ENCODE measurements at regions of chr2 and their contacts with region 1.

Region 1: DNA sequence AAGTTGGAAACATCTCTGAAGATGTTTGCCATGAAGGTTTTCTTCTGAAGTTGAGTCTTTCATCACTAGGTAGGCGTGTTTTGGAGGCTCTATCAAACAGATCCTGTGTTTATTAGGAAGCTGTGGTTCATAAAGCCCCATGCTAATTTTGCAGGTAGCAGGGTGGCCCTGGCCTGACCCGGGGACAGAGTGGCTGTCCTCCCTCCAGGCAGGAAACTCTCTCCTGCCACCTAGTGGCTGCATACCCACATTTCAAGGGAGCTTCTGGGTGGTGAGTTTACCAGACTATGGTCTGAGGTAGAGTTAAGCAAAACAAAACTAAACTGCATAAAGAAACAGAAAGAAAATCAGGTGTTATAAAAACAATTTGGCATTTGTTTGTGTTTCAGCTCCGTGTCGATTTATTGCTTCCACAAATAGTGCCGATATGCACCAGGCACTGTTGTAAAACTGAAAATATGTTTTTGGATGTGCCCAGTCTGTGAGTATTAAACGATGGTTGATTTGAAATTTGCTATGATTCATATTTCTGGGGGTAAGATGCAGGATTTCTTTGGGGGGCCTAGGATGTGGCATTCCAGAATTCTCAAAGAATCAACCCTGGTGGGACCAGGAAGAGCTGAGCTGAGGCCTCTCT is 26.0 kb upstream of the IL37 start:
- DNase-seq: peak; percentile 39
- ATAC-seq: peak; percentile 82
- H3K4me3 ChIP-seq: no peak overlapping the region
- H3K27ac ChIP-seq: no peak overlapping the region
- H3K4me1 ChIP-seq: peaks cover 32% of the 10 kb centered on the region
- H3K27me3 ChIP-seq: no peaks in the 10 kb centered on the region
- CTCF ChIP-seq: peak; percentile 92 to 93 (median 93)
- EP300 ChIP-seq: no peak
- POLR2A ChIP-seq: no peak
- RAD21 ChIP-seq: peak; percentile 94

Region 2: GRCh38 chr2:112733456-112733855 is 151.5 kb before region 1 on chr2:
- CTCF ChIA-PET with region 1: interaction called, 48 read pairs
- POLR2A ChIA-PET with region 1: no interaction called
- RAD21 ChIA-PET with region 1: interaction called, 29 read pairs
- SMC1A ChIA-PET with region 1: interaction called, 38 read pairs
- in situ Hi-C with region 1: no loop called
- intact Hi-C with region 1: no loop called
- DNase-seq: no peak
- ATAC-seq: no peak
- H3K4me3 ChIP-seq: no peak overlapping the region
- H3K27ac ChIP-seq: no peak overlapping the region
- H3K4me1 ChIP-seq: peaks cover under 1% of the 10 kb centered on the region; the same call in 1 of the 2 replicates
- H3K27me3 ChIP-seq: no peaks in the 10 kb centered on the region
- CTCF ChIP-seq: no peak
- EP300 ChIP-seq: no peak
- POLR2A ChIP-seq: no peak
- RAD21 ChIP-seq: no peak

Region 3: GRCh38 chr2:112764071-112765044 is 120.6 kb before region 1 on chr2 and contains the start of gene CKAP2L:
- CTCF ChIA-PET with region 1: interaction called, 45 read pairs
- POLR2A ChIA-PET with region 1: interaction called, 3 read pairs
- RAD21 ChIA-PET with region 1: interaction called, 22 read pairs
- SMC1A ChIA-PET with region 1: interaction called, 23 read pairs
- in situ Hi-C with region 1: no loop called
- intact Hi-C with region 1: no loop called
- DNase-seq: peak; percentile 94
- ATAC-seq: peak; percentile 98
- H3K4me3 ChIP-seq: peak within 1 kb of the TSS; percentile 81
- H3K27ac ChIP-seq: peak within 1 kb of the TSS; percentile 80
- H3K4me1 ChIP-seq: peaks cover 3% of the 10 kb centered on the region
- H3K27me3 ChIP-seq: no peaks in the 10 kb centered on the region
- CTCF ChIP-seq: no peak
- EP300 ChIP-seq: peak in 1 of 2 experiments; percentile 37; a peak in 1 of 4 replicates
- POLR2A ChIP-seq: peak; percentile 79
- RAD21 ChIP-seq: no peak; the same call in 1 of the 2 replicates
- polyA plus RNA-seq, gene CKAP2L: 10.5 to 19.7 TPM

Region 4: DNA sequence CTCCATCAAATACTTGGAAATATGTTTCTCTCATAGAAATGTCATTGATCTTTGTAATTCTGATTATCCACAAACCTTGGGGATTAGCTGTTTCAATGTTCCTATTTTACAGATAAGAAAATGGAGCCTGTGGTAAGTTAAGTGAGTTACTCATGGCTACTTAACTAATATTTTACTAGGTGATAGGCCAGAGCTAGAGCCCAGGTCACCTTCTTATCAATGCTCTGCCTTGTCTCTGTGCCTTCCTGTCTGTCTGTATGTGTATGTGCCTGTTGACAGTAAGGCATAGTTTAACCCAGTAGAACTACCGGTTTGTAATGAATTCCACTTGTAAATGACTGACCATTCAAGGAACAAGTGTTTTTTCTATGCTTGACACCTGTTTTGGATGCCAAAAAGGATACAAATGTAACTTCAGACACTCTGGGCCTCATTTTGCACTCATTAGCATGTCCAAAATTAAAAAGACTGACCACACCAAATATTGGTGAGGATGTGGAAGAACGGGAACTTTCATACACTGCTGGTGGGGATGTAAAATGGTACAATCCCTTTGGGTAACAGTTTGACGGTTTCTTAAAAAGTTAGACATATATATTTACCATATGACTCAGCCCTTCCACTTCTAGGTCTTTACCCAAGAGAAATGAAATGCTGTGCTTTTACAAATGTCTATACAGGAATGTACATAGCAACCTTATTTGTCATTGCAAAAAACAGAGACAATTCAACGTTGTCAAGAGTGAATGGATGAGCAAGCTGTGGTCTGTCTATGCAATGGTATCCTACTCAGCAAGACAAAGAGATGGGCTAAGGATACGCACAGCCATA is 81.1 kb before region 1 on chr2:
- CTCF ChIA-PET with region 1: interaction called, 15 read pairs
- POLR2A ChIA-PET with region 1: interaction called, 3 read pairs
- RAD21 ChIA-PET with region 1: interaction called, 5 read pairs
- SMC1A ChIA-PET with region 1: interaction called, 11 read pairs
- in situ Hi-C with region 1: no loop called
- intact Hi-C with region 1: loop called (anchors 2 kb)
- DNase-seq: no peak
- ATAC-seq: peak; percentile 71
- H3K4me3 ChIP-seq: no peak overlapping the region
- H3K27ac ChIP-seq: peak overlapping the region; percentile 43
- H3K4me1 ChIP-seq: peaks cover 19% of the 10 kb centered on the region
- H3K27me3 ChIP-seq: no peaks in the 10 kb centered on the region
- CTCF ChIP-seq: no peak
- EP300 ChIP-seq: peak; percentile 47 to 69; a peak in 3 of 4 replicates
- POLR2A ChIP-seq: no peak
- RAD21 ChIP-seq: no peak

Region 5: GRCh38 chr2:112906276-112906675 is 21.3 kb after region 1 on chr2:
- CTCF ChIA-PET with region 1: interaction called, 44 read pairs
- POLR2A ChIA-PET with region 1: interaction called, 5 read pairs
- RAD21 ChIA-PET with region 1: interaction called, 5 read pairs
- SMC1A ChIA-PET with region 1: interaction called, 12 read pairs
- in situ Hi-C with region 1: no loop called
- intact Hi-C with region 1: no loop called
- DNase-seq: no peak
- ATAC-seq: peak; percentile 32; the same call in 1 of the 3 replicates
- H3K4me3 ChIP-seq: no peak overlapping the region
- H3K27ac ChIP-seq: no peak overlapping the region
- H3K4me1 ChIP-seq: no peaks in the 10 kb centered on the region
- H3K27me3 ChIP-seq: no peaks in the 10 kb centered on the region
- CTCF ChIP-seq: no peak
- EP300 ChIP-seq: no peak
- POLR2A ChIP-seq: no peak
- RAD21 ChIP-seq: no peak

Region 6: DNA sequence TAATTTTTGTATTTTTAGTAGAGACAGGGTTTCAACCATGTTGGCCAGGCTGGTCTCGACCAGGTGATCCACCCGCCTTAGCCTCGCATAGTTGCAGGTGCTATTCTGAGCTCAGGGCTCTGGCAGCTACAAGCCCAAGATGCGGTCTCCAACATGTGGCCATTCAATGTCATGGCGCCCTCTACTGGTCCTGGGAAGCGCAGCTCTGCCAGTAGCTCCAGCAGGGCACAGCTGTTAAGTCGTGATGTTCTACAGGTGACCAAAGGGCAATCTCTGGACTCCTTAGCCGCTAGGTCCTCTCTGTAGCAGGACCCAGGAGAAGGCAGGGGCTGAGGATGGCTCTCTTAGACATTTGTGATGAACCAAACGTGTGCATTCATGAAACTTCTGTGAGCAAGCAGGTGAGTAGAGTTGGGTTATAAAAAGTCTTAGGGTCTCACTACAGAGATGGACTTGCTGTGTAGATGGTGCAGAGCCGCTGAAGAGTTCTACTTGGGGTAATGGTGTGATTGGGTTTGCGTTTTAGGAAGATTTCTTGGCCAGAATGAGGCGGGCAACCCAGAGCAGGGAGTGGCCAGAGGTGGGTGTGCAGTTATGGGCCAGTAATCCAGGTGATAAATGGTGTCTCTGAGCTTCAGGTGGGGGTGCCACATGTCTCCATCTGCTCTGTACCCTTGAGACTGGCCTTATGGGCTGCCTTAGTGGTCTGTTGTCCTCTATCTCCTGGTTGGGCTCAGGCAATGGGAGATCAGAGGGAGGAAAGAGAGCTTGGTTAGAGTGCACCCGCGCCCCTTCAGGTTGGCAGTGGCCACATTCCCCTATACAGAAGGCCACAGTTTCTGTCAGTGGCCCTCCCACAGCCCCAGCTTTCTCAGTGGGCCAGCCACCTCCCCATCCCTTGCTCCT is 57.0 kb after region 1 on chr2:
- CTCF ChIA-PET with region 1: interaction called, 98 read pairs
- POLR2A ChIA-PET with region 1: no interaction called
- RAD21 ChIA-PET with region 1: interaction called, 104 read pairs
- SMC1A ChIA-PET with region 1: interaction called, 40 read pairs
- in situ Hi-C with region 1: no loop called
- intact Hi-C with region 1: loop called (anchors 2 kb)
- DNase-seq: peak; percentile 19
- ATAC-seq: peak; percentile 100
- H3K4me3 ChIP-seq: no peak overlapping the region
- H3K27ac ChIP-seq: no peak overlapping the region
- H3K4me1 ChIP-seq: no peaks in the 10 kb centered on the region
- H3K27me3 ChIP-seq: 0 out of 4 replicates have a peak, but pooled peaks cover 0 to 6% of the 10 kb centered on the region in 2 experiments
- CTCF ChIP-seq: peak; percentile 93 to 96 (median 95)
- EP300 ChIP-seq: no peak
- POLR2A ChIP-seq: no peak
- RAD21 ChIP-seq: peak; percentile 96

Region 7: DNA sequence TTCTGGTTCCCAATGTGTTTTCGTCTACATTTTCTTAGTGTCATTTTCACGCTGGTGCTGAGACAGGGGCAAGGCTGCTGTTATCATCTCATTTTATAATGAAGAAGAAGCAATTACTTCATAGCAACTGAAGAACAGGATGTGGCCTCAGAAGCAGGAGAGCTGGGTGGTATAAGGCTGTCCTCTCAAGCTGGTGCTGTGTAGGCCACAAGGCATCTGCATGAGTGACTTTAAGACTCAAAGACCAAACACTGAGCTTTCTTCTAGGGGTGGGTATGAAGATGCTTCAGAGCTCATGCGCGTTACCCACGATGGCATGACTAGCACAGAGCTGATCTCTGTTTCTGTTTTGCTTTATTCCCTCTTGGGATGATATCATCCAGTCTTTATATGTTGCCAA is 100.1 kb after region 1 on chr2:
- CTCF ChIA-PET with region 1: no interaction called
- POLR2A ChIA-PET with region 1: no interaction called
- RAD21 ChIA-PET with region 1: no interaction called
- SMC1A ChIA-PET with region 1: no interaction called
- in situ Hi-C with region 1: no loop called
- intact Hi-C with region 1: no loop called
- DNase-seq: no peak
- ATAC-seq: no peak
- H3K4me3 ChIP-seq: no peak overlapping the region
- H3K27ac ChIP-seq: no peak overlapping the region
- H3K4me1 ChIP-seq: peaks cover 2% of the 10 kb centered on the region; the same call in 1 of the 2 replicates
- H3K27me3 ChIP-seq: no peaks in the 10 kb centered on the region
- CTCF ChIP-seq: no peak
- EP300 ChIP-seq: no peak
- POLR2A ChIP-seq: no peak
- RAD21 ChIP-seq: no peak

Region 8: DNA sequence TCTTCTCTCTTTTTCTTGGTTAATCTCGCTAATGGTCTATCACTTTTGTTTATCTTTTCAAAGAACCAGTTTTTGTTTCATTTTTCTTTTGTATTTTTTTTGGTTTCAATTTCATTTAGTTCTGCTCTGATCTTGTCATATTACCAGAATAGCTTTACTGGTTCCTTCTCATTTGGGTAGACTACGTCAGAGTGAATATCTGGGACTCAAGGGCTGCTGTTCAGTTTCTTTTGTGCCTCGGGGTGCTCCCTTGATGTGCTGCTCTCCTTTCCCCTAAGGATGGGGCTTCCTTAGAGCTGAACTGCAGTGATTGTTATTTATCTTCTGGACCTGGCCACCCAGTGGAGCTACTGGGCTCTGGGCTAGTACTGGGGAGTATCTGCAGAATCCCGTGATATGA is 213.1 kb after region 1 on chr2:
- CTCF ChIA-PET with region 1: no interaction called
- POLR2A ChIA-PET with region 1: no interaction called
- RAD21 ChIA-PET with region 1: no interaction called
- SMC1A ChIA-PET with region 1: no interaction called
- in situ Hi-C with region 1: no loop called
- intact Hi-C with region 1: no loop called
- DNase-seq: no peak
- ATAC-seq: peak; percentile 65
- H3K4me3 ChIP-seq: no peak overlapping the region
- H3K27ac ChIP-seq: no peak overlapping the region
- H3K4me1 ChIP-seq: no peaks in the 10 kb centered on the region
- H3K27me3 ChIP-seq: no peaks in the 10 kb centered on the region; a peak in 1 of 4 replicates
- CTCF ChIP-seq: no peak
- EP300 ChIP-seq: no peak
- POLR2A ChIP-seq: no peak
- RAD21 ChIP-seq: no peak

Region 9: GRCh38 chr2:113233593-113234550 is 348.9 kb after region 1 on chr2:
- CTCF ChIA-PET with region 1: no interaction called
- POLR2A ChIA-PET with region 1: no interaction called
- RAD21 ChIA-PET with region 1: no interaction called
- SMC1A ChIA-PET with region 1: no interaction called
- in situ Hi-C with region 1: no loop called
- intact Hi-C with region 1: no loop called
- DNase-seq: no peak
- ATAC-seq: peak; percentile 63
- H3K4me3 ChIP-seq: no peak overlapping the region
- H3K27ac ChIP-seq: no peak overlapping the region
- H3K4me1 ChIP-seq: peaks cover 2% of the 10 kb centered on the region; the same call in 1 of the 2 replicates
- H3K27me3 ChIP-seq: no peaks in the 10 kb centered on the region; a peak in 2 of 4 replicates
- CTCF ChIP-seq: peak in 2 of 3 experiments; percentile 25 to 31; a peak in 2 of 6 replicates
- EP300 ChIP-seq: no peak
- POLR2A ChIP-seq: no peak
- RAD21 ChIP-seq: no peak

Region 10: DNA sequence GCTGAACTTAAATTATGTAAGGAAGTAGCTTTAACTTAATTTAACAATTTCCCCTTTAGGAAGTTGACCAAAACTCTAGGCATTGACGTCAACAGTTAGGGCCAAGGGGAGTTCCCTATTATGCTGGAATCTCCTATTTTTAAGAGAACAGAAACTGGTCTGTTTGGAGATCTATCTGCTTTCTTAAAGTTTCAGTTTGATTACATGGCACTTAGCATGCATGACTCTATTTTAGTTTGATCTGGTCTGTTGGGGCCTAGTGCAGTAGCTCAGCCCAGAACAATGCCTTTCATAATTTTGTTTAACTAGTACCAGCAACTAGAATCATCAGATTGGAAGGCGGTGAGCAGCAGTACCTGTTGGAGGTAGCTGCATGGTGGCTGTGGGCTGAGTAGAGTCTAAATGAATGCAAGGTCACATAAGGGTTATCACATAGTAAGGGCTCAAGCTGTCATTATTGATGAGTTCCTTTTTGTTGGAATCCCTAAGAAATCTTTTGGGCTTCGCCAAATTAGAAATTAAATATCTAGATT is 492.0 kb after region 1 on chr2:
- CTCF ChIA-PET with region 1: no interaction called
- POLR2A ChIA-PET with region 1: no interaction called
- RAD21 ChIA-PET with region 1: no interaction called
- SMC1A ChIA-PET with region 1: no interaction called
- in situ Hi-C with region 1: no loop called
- intact Hi-C with region 1: no loop called
- DNase-seq: peak; percentile 34
- ATAC-seq: peak; percentile 97
- H3K4me3 ChIP-seq: no peak overlapping the region
- H3K27ac ChIP-seq: peak overlapping the region; percentile 26; the same call in 1 of the 2 replicates
- H3K4me1 ChIP-seq: peaks cover 4% of the 10 kb centered on the region
- H3K27me3 ChIP-seq: no peaks in the 10 kb centered on the region
- CTCF ChIP-seq: no peak
- EP300 ChIP-seq: no peak
- POLR2A ChIP-seq: no peak
- RAD21 ChIP-seq: no peak